Activated CD4-positive, alpha-beta T cell treated with anti-CD3 and anti-CD28 coated beads, Interleukin-2, amount 10 ng/mL, durations not matched to agents 24 days and 14 days (primary cell): ENCODE measurements at regions of chr2 and their contacts with region 1.

Region 1: GRCh38 chr2:54106631-54107454 is 8.6 kb upstream of the ACYP2 start:
- DNase-seq: peak; percentile 84
- H3K4me3 Mint-ChIP-seq: no peak overlapping the region
- H3K27ac Mint-ChIP-seq: no peak overlapping the region
- H3K4me1 Mint-ChIP-seq: peaks cover 8% of the 10 kb centered on the region
- H3K27me3 Mint-ChIP-seq: peaks cover 11% of the 10 kb centered on the region

Region 2: GRCh38 chr2:54052825-54053718 is 53.8 kb before region 1 on chr2:
- intact Hi-C with region 1: no loop called
- DNase-seq: no peak
- H3K4me3 Mint-ChIP-seq: peak overlapping the region; percentile 48
- H3K27ac Mint-ChIP-seq: peak overlapping the region; percentile 31
- H3K4me1 Mint-ChIP-seq: peaks cover 17% of the 10 kb centered on the region
- H3K27me3 Mint-ChIP-seq: no peaks in the 10 kb centered on the region

Region 3: DNA sequence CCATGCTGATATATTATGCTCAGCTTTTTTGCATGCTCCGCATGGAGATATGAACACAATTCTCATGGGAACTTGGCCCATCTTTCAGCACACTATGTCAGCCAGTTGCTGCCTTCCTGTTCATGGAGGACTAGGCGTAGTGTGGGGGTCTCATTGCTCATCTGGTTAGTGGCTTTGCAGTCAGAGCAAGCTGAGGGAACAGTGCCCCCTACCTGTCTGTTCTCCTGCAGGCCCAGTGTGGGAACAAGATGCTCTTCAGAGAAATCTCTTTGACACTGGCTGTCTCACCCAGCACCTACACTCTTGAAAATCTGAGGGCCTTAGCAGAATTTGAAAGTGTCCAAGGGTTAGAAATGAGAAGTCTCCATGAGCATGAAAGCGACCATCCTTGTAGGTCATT is 396.3 kb after region 1 on chr2:
- intact Hi-C with region 1: loop called (anchors 2 kb)
- DNase-seq: peak; percentile 74
- H3K4me3 Mint-ChIP-seq: no peak overlapping the region
- H3K27ac Mint-ChIP-seq: no peak overlapping the region
- H3K4me1 Mint-ChIP-seq: no peaks in the 10 kb centered on the region
- H3K27me3 Mint-ChIP-seq: peaks cover 14% of the 10 kb centered on the region